ENCODE measurements at regions of chr17 and their contacts with region 1.

Region 1: GRCh38 chr17:27430882-27431491 is 25.3 kb upstream of the KSR1 start:
- DNase-seq: peak; percentile 42
- H3K4me3 ChIP-seq: no peak overlapping the region
- H3K27ac ChIP-seq: no peak overlapping the region
- H3K4me1 ChIP-seq: no peaks in the 10 kb centered on the region
- H3K27me3 ChIP-seq: no peaks in the 10 kb centered on the region
- CTCF ChIP-seq: peak; percentile 47

Region 2: DNA sequence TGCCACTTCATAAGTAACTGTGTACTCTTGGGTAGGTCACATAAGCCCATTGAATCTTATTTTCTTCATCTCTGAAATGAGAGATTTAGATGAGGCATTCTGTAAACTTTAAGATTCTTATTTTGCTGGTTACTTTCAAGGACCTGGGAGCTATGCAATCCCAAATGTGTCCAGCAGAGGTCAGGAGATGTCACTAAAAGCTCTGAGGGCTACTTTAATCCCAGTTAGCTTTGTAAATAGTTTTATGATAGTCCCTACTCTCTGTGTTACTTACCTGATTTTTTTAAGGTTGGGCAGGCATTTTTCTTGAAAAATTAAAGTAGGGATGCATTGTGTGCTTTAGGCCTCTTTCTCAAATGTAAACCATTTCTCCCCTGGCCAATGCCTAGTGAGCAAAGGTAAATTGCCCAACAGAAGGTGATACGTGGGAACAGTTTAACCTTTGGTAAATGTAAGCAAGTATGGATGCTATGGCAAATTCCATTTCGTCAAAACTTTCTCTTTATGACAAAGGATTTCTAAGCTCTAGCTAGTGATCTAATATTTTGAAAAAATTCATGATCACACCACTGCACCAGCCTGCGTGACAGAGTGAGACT is 194.2 kb before region 1 on chr17:
- intact Hi-C with region 1: loop called (anchors 10 kb)
- DNase-seq: peak; percentile 88
- H3K4me3 ChIP-seq: no peak overlapping the region
- H3K27ac ChIP-seq: no peak overlapping the region
- H3K4me1 ChIP-seq: no peaks in the 10 kb centered on the region
- H3K27me3 ChIP-seq: no peaks in the 10 kb centered on the region
- CTCF ChIP-seq: peak; percentile 90

Region 3: GRCh38 chr17:27353461-27354050 is 77.4 kb before region 1 on chr17:
- intact Hi-C with region 1: loop called (anchors 5 kb)
- DNase-seq: peak; percentile 91
- H3K4me3 ChIP-seq: peak overlapping the region; percentile 46
- H3K27ac ChIP-seq: peak overlapping the region; percentile 64
- H3K4me1 ChIP-seq: peaks cover 3% of the 10 kb centered on the region
- H3K27me3 ChIP-seq: no peaks in the 10 kb centered on the region
- CTCF ChIP-seq: peak; percentile 87

Measured in colonic mucosa (tissue), 4 donors.